CD8-positive, alpha-beta memory T cell (primary cell): ENCODE measurements at regions of chr10 and their contacts with region 1.

Region 1: DNA sequence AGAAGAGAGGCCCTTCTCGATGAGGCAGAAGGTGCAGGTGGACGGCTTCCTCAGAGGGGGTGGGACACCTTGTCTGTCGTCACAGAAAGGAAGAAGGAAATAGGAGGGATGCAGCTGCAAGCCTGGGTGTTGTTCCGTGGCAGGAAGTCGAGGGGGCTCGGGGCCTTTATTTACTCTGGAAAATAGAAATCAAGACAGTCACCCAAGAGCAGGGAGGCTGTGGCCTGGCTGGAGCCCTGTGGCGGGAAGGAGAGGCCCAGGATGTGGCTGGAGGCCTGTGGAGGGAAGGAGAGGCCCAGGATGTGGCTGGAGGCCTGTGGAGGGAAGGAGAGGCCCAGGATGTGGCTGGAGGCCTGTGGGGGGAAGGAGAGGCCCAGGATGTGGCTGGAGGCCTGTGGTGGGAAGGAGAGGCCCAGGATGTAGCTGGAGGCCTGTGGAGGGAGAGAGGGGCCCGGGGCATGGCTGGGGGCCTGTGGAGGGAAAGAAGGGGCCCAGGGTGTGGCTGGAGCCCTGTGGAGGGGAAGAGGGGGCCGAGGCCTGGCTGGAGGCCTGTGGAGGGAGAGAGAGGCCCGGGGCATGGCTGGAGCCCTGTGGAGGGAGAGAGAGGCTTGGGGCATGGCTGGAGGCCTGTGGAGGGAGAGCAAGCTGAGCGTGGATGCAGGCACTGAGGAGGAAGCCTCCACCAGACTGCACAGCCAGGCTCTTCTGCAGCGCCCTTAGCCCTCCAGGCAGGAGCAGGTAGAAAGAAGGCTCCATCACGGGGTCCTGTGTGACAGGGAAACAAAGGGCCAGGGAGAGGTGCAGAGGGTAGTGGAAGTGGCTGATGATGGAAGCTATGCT is 97.3 kb upstream of the SFMBT2 start:
- DNase-seq: peak in 3 of 5 donors; percentile 22 to 51 (median 23)
- H3K4me3 ChIP-seq: no peak overlapping the region
- H3K4me3 Mint-ChIP-seq: peak overlapping the region; percentile 21 to 90 (median 63)
- H3K27ac ChIP-seq: peak overlapping the region; percentile 22
- H3K27ac Mint-ChIP-seq: peak overlapping the region; percentile 75 to 99 (median 90)
- H3K4me1 ChIP-seq: peaks cover 25% of the 10 kb centered on the region
- H3K4me1 Mint-ChIP-seq: peaks cover 53 to 70% (median 66%) of the 10 kb centered on the region in 3 donors
- H3K27me3 ChIP-seq: no peaks in the 10 kb centered on the region
- H3K27me3 Mint-ChIP-seq: no peaks in the 10 kb centered on the region

Region 2: GRCh38 chr10:7218968-7219367 is 289.1 kb before region 1 on chr10:
- CTCF ChIA-PET with region 1: no interaction called
- POLR2A ChIA-PET with region 1: no interaction called
- DNase-seq: no peak
- H3K4me3 ChIP-seq: no peak overlapping the region
- H3K4me3 Mint-ChIP-seq: no peak overlapping the region
- H3K27ac ChIP-seq: no peak overlapping the region
- H3K27ac Mint-ChIP-seq: no peak overlapping the region
- H3K4me1 ChIP-seq: no peaks in the 10 kb centered on the region
- H3K4me1 Mint-ChIP-seq: peaks cover 0 to 6% (median 4%) of the 10 kb centered on the region in 3 donors
- H3K27me3 ChIP-seq: no peaks in the 10 kb centered on the region
- H3K27me3 Mint-ChIP-seq: peaks cover 0 to 1% of the 10 kb centered on the region in 2 donors

Region 3: GRCh38 chr10:7484456-7485243 is 23.5 kb before region 1 on chr10:
- CTCF ChIA-PET with region 1: no interaction called
- POLR2A ChIA-PET with region 1: interaction called, 12 read pairs
- DNase-seq: peak; percentile 36 to 84 (median 77)
- H3K4me3 ChIP-seq: peak overlapping the region; percentile 57
- H3K4me3 Mint-ChIP-seq: peak overlapping the region; percentile 37 to 82 (median 79)
- H3K27ac ChIP-seq: peak overlapping the region; percentile 52
- H3K27ac Mint-ChIP-seq: peak overlapping the region; percentile 74 to 98 (median 91)
- H3K4me1 ChIP-seq: peaks cover 83% of the 10 kb centered on the region
- H3K4me1 Mint-ChIP-seq: peaks cover 79 to 92% (median 91%) of the 10 kb centered on the region in 3 donors
- H3K27me3 ChIP-seq: no peaks in the 10 kb centered on the region
- H3K27me3 Mint-ChIP-seq: peaks cover 0 to 2% of the 10 kb centered on the region in 2 donors